Ascending aorta (tissue), 2 donors: ENCODE measurements at regions of chr17 and their contacts with region 1.

Region 1: DNA sequence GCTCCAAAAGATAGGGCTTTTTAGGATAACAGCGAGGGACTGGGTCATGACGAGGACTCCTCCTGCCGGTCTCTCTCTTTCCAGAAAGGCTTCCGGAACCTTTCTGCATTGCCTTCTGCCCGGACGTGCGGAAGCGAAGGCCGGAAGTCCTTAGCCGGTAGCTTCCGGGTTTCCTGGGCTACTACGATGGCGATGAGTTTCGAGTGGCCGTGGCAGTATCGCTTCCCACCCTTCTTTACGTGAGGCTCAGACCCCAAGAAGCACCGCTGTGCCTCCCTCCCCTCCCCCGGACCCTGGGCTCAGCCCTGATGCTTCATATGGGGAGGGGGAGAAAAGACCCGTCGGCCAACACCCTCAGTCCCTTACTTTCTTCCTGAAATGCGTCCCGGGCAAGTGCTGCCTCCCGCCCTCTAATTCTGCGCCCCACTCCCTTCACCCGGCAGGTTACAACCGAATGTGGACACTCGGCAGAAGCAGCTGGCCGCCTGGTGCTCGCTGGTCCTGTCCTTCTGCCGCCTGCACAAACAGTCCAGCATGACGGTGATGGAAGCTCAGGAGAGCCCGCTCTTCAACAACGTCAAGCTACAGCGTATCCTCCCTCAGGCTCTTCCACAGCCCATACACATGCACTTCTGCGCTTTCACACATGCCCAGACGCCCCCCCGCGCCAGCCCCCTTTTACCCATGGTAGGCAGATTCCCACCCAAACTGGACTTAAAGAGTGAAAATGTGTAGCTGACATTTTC is at the start of gene VPS25:
- DNase-seq: peak; percentile 17 to 87
- H3K4me3 ChIP-seq: peak within 1 kb of the TSS; percentile 79 to 81
- H3K27ac ChIP-seq: peak within 1 kb of the TSS; percentile 68 to 85
- H3K4me1 ChIP-seq: peaks cover 4 to 5% of the 10 kb centered on the region in 2 donors
- H3K27me3 ChIP-seq: no peaks in the 10 kb centered on the region
- CTCF ChIP-seq: peak in 1 of 3 experiments; percentile 13
- total RNA-seq, gene VPS25: 40.9 TPM

Region 2: DNA sequence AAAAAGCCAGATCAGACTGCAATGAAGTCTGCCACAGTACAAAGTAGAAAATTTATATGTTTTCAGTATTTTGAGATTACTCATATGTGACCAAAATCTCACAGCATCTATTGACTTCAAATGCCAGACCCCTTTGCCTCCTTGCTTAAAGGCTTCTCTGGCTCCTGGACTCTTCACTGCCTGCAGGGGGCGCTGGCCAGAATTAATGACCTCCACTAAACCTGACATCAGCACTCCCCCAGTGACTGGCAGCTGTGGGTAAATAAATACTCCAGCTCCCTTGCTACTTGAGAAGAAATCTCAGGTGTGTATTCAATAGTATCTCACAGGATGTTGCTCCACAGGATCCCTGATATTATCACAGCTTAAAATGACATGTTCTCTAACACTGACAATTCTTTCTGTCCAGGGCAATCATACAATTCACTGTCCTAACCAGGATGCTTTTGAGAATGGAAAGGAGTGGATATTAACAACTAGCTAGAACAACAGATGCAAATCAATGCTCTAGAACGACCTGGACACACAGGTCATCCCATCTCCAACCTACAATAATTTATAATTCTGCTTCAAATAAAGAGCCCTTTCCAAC is 46.6 kb after region 1 on chr17:
- intact Hi-C with region 1: loop called (anchors 5 kb)
- DNase-seq: no peak
- H3K4me3 ChIP-seq: no peak overlapping the region
- H3K27ac ChIP-seq: no peak overlapping the region
- H3K4me1 ChIP-seq: peaks cover 6 to 12% of the 10 kb centered on the region in 2 donors
- H3K27me3 ChIP-seq: no peaks in the 10 kb centered on the region
- CTCF ChIP-seq: peak in 2 of 3 experiments; percentile 49 to 58

Region 3: DNA sequence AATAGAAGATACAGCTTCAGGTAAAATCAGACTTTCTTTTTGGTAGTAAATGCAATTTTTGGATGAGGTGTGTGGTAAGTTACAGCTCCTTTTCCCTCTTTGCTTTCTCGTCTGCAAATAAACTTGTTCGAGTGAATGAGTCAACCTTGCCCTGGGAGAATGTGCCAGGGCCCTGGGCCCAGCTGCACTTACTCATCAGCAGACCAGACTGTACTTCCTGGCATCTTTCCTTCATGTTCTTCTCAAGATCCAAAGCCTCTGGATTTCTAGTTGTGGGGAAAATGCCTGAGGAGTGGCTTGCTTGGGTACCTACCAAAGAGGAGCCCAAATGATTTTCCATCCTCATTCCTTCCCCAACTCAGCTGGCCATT is 121.7 kb after region 1 on chr17:
- intact Hi-C with region 1: no loop called
- DNase-seq: peak; percentile 46 to 92
- H3K4me3 ChIP-seq: no peak overlapping the region
- H3K27ac ChIP-seq: peak overlapping the region; percentile 47 to 88
- H3K4me1 ChIP-seq: peaks cover 28 to 40% of the 10 kb centered on the region in 2 donors
- H3K27me3 ChIP-seq: no peaks in the 10 kb centered on the region
- CTCF ChIP-seq: no peak